ENCODE measurements at regions of chr3 and their contacts with region 1.

Region 1: GRCh38 chr3:4978204-4978965 is 852 bp upstream of the BHLHE40 start:
- DNase-seq: peak; percentile 95
- H3K4me3 ChIP-seq: peak overlapping the region; percentile 68 to 69
- H3K27ac ChIP-seq: peak overlapping the region; percentile 98
- H3K4me1 ChIP-seq: peaks cover 17% of the 10 kb centered on the region
- H3K27me3 ChIP-seq: no peaks in the 10 kb centered on the region
- CTCF ChIP-seq: peak in 1 of 4 experiments; percentile 7
- POLR2A ChIP-seq: peak; percentile 45

Region 2: DNA sequence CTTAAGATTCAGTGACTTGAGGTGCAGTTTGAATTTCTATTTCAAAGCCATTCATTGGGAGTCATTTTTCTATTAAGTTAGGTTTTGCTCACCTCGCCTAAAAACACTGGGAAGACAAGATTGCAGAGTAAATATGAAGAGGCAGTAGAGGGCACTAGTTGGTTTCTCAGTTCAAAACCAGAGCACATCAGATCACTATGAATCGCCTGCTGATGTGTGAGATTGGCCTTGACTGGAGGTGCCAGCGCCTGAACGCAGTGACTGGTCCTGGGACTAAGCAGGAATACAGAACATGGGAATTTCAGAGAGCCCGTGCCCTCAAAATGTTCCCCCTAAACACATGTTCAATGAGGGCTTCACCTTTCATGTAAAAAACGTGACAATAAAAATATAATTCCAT is 256.3 kb before region 1 on chr3:
- intact Hi-C with region 1: loop called (anchors 5 kb)
- DNase-seq: peak; percentile 43
- H3K4me3 ChIP-seq: no peak overlapping the region
- H3K27ac ChIP-seq: peak overlapping the region; percentile 59
- H3K4me1 ChIP-seq: peaks cover 8% of the 10 kb centered on the region
- H3K27me3 ChIP-seq: no peaks in the 10 kb centered on the region
- CTCF ChIP-seq: peak in 3 of 4 experiments; percentile 34 to 62 (median 62)
- POLR2A ChIP-seq: no peak

Region 3: DNA sequence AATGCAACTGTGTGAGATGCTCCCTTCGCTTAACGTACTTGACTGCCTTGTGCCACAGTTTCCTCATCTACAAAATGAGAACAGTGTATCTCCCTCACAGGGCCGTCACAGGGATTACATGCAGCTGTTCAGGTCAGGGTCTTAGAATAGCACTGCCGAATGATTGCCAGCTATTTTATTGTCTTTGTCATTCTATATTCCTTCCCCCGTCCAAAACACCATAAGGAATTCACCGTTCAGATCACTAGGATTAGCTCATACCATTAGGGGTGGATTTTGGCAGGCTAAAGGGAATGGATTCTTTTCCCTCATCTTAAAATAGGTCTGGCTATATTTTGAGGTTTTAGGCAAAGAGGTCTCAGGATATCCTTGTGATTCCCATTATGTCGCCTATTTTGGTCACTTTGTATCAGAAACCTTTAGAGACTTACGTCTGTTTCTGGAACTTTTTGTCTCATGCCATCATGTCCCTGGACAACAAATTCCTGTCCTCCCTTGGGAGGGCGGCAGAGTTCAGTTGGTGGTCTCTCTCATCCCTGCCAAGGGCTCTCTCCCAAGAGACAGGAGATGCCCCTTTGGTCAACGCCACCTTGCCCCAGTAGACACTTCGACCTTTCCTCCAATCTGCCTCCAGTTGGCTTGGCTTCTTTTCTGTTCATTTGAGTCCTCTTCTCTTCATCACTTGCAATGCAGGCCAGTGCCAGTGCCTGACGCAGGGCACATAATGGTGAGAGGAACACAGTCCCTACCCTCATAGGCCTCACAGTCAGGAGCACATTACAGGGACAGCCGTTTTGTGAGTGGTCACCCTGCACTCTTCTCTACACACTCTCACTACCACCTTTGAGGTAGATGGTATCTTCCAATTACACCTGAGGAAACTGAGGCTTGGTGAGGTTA is 170.8 kb before region 1 on chr3:
- intact Hi-C with region 1: loop called (anchors 2 kb)
- DNase-seq: no peak
- H3K4me3 ChIP-seq: no peak overlapping the region
- H3K27ac ChIP-seq: peak overlapping the region; percentile 46 to 58
- H3K4me1 ChIP-seq: no peaks in the 10 kb centered on the region
- H3K27me3 ChIP-seq: no peaks in the 10 kb centered on the region
- CTCF ChIP-seq: no peak
- POLR2A ChIP-seq: no peak

Region 4: GRCh38 chr3:4826237-4827100 is 151.9 kb before region 1 on chr3:
- intact Hi-C with region 1: loop called (anchors 5 kb)
- DNase-seq: peak; percentile 14
- H3K4me3 ChIP-seq: no peak overlapping the region
- H3K27ac ChIP-seq: peak overlapping the region; percentile 38 to 54
- H3K4me1 ChIP-seq: peaks cover 8% of the 10 kb centered on the region
- H3K27me3 ChIP-seq: no peaks in the 10 kb centered on the region
- CTCF ChIP-seq: no peak
- POLR2A ChIP-seq: no peak

Measured in prostate gland (tissue), 2 donors.